ENCODE measurements at regions of chr6 and their contacts with region 1.

Region 1: DNA sequence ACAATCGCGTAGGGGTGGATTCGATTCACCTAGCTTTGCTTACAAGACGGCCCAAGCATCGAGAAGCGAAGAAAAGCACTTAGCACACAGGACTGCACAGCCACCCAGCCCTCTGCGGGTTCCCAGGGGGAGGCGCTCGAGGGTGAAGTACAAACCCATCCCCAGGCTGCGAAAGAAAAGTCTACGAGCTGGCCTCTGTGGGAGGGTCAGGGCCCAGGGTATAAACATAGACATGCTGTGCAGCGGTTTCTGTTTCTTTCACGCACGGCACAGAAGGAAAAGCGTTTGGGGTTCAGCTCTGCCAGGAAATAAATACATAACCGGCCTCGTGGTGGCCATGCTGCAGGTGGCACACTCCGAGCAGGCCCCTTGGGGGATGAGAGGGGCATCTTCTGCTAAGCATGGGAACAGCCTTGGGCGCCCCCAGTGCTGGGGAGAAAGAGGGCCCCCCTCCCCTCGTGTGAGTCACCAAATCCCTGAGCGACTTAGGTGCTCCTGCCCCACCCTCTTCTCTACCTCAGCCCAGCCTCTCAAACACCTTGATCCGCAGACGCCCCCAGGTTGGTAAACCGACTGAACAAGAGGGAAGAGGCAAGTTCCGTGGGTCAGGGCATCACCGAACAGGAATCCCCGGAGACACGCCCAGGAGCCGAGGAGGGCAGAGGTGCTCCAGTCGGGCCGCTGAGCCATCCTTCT is 91.6 kb upstream of the RIPOR2 start:
- DNase-seq: peak; percentile 87
- CTCF ChIP-seq: peak; percentile 79

Region 2: GRCh38 chr6:24019830-24020229 is 1007.5 kb before region 1 on chr6:
- CTCF ChIA-PET with region 1: no interaction called
- POLR2A ChIA-PET with region 1: no interaction called
- DNase-seq: no peak
- CTCF ChIP-seq: no peak

Region 3: DNA sequence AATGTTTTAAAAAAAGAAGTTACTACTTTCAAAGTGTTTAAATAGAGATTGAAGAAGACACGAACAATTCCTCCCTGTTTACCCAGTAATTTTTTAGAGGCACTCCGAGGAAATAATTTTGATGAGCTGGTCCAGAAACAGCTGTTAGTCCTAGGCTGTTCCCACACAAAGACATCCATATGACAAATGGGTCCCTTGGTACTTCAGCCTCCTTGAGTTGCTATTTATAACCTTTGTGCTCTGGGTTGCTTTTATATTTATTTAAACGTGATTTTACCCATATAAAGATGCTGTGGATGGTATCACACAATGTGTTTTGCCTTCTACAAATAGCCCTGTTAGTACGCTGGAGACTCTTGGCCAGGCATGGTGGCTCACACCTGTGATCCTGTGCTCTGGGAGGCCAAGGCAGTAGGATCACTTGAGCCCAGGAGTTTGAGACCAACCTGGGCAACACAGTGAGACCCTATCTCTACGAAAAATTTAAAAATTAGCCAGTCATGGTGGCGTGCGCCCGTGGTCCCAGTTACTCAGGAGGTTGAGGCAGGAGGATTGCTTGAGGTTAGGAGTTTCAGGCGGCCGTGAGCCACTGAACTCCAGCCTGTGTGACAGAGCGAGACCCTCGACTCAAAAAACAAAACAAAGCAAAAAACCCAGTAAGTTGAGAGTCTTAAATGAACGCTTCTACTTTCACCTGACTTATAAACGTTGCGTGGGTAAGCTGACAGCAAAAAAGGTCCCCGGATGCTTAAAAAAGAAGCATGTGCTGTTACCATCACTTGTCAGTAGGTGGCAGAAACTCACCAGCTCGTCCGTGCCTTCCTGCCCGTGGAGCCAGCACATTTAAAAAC is 171.7 kb before region 1 on chr6:
- CTCF ChIA-PET with region 1: interaction called, 37 read pairs
- POLR2A ChIA-PET with region 1: no interaction called
- DNase-seq: peak; percentile 78
- CTCF ChIP-seq: peak; percentile 81

Region 4: GRCh38 chr6:24997905-24998304 is 29.5 kb before region 1 on chr6:
- CTCF ChIA-PET with region 1: interaction called, 29 read pairs
- POLR2A ChIA-PET with region 1: no interaction called
- DNase-seq: no peak
- CTCF ChIP-seq: no peak

Region 5: GRCh38 chr6:25006565-25007001 is 20.8 kb before region 1 on chr6:
- CTCF ChIA-PET with region 1: interaction called, 49 read pairs
- POLR2A ChIA-PET with region 1: no interaction called
- DNase-seq: peak; percentile 26
- CTCF ChIP-seq: no peak

Region 6: GRCh38 chr6:25042036-25042521 is 14.7 kb after region 1 on chr6:
- CTCF ChIA-PET with region 1: interaction called, 129 read pairs
- POLR2A ChIA-PET with region 1: interaction called, 3 read pairs
- DNase-seq: peak; percentile 28
- CTCF ChIP-seq: no peak

Region 7: DNA sequence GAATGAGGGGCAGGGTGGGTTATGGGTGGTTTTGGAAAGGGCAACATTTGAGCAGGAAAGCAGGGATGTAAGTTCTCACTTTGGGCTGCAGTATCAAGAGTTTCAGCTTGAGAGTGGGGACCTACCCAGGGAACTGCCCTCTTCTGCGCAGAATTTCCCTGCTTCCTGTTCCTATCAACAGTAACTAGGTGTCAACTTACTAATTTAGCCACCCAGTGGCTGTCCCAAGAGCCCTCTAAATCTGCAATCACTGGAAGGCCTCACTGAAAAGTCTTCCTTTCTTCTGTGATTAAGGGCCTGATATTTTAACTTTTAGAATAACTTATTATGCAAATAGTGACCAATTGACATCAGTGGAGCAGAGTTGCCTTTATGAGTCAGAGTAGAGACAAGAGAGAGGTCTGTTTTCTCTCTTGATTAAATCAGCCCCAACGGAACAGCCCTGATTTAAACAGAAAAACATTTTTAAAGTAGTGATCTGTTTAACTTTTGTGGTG is 26.6 kb after region 1 on chr6:
- CTCF ChIA-PET with region 1: interaction called, 38 read pairs
- POLR2A ChIA-PET with region 1: no interaction called
- DNase-seq: peak; percentile 48
- CTCF ChIP-seq: peak; percentile 13

Region 8: GRCh38 chr6:25061289-25061936 is 34.0 kb after region 1 on chr6:
- CTCF ChIA-PET with region 1: interaction called, 132 read pairs
- POLR2A ChIA-PET with region 1: interaction called, 8 read pairs
- DNase-seq: no peak
- CTCF ChIP-seq: no peak

Region 9: DNA sequence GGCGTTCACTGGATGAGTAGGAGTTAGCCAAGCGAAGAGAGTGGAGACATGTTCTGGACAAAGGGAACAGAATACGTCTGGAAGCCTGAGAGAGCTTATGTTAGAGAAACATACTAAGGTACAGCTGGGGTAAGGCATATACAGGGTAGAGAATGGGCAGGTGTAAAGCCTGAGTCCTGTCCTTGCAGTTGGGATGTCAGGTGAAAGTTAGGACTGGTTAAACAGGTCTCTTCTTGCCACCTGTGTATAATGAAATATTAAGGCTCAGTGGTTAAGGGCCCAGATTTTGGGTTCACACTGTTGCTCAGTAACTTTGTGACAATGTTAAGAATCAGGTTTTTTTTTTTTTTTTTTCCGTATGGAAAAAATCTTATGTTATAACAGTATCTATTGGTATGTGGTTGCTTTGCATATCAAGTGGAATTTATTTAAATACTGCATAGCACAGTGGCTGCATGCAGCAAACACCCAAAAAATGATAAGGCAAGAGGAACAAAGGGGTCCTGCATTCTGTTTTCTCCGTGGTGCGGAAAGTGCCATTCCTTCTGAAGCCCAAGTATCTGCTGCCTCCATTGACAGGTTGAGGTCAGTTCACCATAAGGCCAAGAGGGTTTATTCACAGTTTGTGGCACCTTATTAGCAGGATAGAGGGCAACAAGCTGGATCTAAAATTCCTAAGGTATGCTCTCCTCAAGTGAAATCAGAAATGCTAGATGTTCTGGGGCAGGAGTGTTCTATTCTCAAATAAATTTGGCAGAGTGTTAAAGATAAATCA is 261.0 kb after region 1 on chr6:
- CTCF ChIA-PET with region 1: no interaction called
- POLR2A ChIA-PET with region 1: no interaction called
- DNase-seq: no peak
- CTCF ChIP-seq: no peak

Region 10: DNA sequence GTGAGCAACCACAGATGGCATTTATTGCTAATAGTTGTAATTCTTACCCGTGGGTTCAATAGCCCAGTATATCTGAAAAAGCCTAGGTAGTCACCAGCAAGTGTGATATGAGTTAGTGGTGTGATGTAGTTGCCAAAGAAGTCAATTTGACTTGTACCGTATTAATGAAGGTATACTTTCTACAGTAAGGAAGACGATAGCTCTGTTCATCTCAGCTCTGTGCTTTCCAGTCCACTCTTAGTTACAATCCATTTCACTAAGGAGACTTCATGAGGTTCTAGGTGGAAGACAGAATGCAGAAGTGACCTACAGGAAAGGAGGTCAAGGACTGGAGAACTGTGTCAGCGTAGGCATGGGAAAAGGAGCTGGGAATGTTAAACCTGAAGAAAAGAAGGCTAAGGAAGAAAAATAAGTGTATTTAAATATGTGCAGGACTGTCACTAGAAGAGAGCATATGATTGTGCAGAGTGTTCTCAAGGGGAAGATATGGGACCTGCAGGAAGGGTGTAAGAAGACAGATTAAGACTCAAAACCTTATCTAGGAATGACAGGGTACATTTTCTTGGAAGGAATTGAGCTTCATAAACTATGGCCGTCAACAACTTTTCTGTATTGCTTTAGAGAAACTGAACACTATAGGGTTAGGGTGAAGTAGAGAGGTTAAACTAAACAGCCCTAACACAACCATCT is 507.7 kb after region 1 on chr6:
- CTCF ChIA-PET with region 1: no interaction called
- POLR2A ChIA-PET with region 1: no interaction called
- DNase-seq: no peak
- CTCF ChIP-seq: no peak